ENCODE measurements at regions of chr2 and their contacts with region 1.

Region 1: GRCh38 chr2:88880441-88880953 is 189.0 kb downstream of the RPIA start:
- DNase-seq: peak; percentile 9 to 36
- H3K4me3 ChIP-seq: no peak overlapping the region
- H3K27ac ChIP-seq: no peak overlapping the region
- H3K4me1 ChIP-seq: no peaks in the 10 kb centered on the region
- H3K27me3 ChIP-seq: no peaks in the 10 kb centered on the region
- CTCF ChIP-seq: peak; percentile 88

Region 2: GRCh38 chr2:88818381-88818780 is 62.1 kb before region 1 on chr2:
- CTCF ChIA-PET with region 1: no interaction called
- POLR2A ChIA-PET with region 1: no interaction called
- intact Hi-C with region 1: no loop called
- DNase-seq: no peak
- H3K4me3 ChIP-seq: no peak overlapping the region
- H3K27ac ChIP-seq: no peak overlapping the region
- H3K4me1 ChIP-seq: no peaks in the 10 kb centered on the region
- H3K27me3 ChIP-seq: no peaks in the 10 kb centered on the region
- CTCF ChIP-seq: no peak

Region 3: GRCh38 chr2:88950010-88950409 is 69.5 kb after region 1 on chr2:
- CTCF ChIA-PET with region 1: no interaction called
- POLR2A ChIA-PET with region 1: no interaction called
- intact Hi-C with region 1: loop called (anchors 10 kb)
- DNase-seq: no peak
- H3K4me3 ChIP-seq: no peak overlapping the region
- H3K27ac ChIP-seq: no peak overlapping the region
- H3K4me1 ChIP-seq: no peaks in the 10 kb centered on the region
- H3K27me3 ChIP-seq: peaks cover 24% of the 10 kb centered on the region
- CTCF ChIP-seq: peak; percentile 56